ENCODE measurements at regions of chr20 and their contacts with region 1.

Region 1: GRCh38 chr20:50790651-50791277 is 4.1 kb upstream of the BCAS4 start:
- DNase-seq: peak; percentile 90
- CTCF ChIP-seq: peak; percentile 92

Region 2: DNA sequence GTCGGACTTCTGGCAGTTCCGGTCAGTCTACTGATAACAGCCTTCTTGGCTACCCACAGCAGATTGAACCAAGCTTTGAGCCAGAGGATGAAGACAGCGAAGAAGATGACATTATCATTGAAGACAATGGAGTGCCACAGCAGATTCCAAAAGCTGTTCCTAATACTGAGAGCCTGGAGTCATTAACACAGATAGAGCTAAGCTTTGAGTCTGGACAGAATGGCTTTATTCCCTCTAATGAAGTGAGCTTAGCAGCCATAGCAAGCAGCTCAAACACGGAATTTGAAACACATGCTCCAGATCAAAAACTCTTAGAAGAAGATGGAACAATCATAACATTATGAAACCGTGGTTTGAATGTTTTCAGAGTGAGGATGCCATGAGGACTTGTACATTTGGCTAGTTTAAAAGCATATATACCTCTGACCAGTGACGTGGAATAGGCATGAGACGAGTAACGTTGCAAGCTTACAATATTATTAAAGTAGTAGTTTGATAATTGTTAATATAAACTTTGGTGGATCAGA is 40.6 kb before region 1 on chr20:
- CTCF ChIA-PET with region 1: interaction called, 18 read pairs
- POLR2A ChIA-PET with region 1: no interaction called
- DNase-seq: no peak
- CTCF ChIP-seq: no peak

Region 3: GRCh38 chr20:50824193-50824632 is 33.4 kb after region 1 on chr20:
- CTCF ChIA-PET with region 1: interaction called, 26 read pairs
- POLR2A ChIA-PET with region 1: no interaction called
- DNase-seq: no peak
- CTCF ChIP-seq: no peak

Region 4: DNA sequence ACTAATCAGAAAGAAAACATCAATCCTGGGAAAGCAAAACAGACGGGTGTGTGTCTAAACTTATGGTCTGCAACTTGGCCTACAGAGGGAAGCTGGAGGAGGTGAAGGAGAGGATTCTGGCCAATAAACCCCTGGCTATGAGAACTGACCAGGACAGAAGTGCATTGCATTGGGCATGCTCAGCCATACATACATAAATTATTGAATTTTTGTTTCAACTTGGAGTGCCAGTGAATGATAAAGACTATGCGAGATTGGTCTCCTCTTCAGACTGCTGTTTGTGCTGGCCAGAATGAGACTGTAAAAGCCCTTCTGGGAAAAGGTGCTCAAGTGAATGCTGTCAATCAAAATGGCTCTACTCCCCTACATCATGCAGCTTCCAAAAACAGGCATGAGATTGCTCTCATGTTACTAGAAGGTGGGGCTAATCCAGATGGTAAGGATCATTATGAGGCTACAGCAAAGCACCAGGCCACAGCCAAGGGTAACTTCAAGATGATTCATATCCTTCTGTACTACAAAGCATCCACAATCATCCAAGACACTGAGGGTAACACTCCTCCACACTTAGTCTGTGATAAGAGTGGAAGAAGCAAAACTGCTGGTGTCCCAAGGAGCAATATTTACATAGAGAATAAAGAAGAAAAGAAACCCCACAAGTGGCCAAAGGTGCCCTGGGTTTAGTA is 123.1 kb after region 1 on chr20:
- CTCF ChIA-PET with region 1: interaction called, 24 read pairs
- POLR2A ChIA-PET with region 1: no interaction called
- DNase-seq: no peak
- CTCF ChIP-seq: no peak

Region 5: DNA sequence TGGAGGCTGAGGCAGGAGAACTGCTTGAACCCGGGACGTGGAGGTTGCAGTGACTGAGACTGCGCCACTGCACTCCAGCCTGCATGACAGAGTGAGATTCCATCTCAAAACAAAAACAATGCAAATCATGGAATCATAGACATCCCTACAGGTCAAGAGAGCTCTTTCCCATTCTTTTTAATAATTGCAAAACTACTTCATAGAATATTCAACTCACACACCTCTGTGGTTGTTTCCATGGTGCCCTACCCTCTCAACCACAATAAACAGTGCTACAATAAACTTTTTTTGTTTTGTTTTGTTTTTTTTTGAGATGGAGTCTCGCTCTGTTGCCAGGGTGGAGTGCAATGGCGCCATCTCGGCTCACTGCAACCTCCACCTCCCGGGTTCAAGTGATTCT is 152.3 kb after region 1 on chr20:
- CTCF ChIA-PET with region 1: interaction called, 11 read pairs
- POLR2A ChIA-PET with region 1: no interaction called
- DNase-seq: no peak
- CTCF ChIP-seq: no peak

Region 6: GRCh38 chr20:50980851-50981713 is 190.3 kb after region 1 on chr20:
- CTCF ChIA-PET with region 1: interaction called, 21 read pairs
- POLR2A ChIA-PET with region 1: no interaction called
- DNase-seq: peak; percentile 75
- CTCF ChIP-seq: peak; percentile 74